ENCODE measurements at regions of chr1 and their contacts with region 1.

Region 1: DNA sequence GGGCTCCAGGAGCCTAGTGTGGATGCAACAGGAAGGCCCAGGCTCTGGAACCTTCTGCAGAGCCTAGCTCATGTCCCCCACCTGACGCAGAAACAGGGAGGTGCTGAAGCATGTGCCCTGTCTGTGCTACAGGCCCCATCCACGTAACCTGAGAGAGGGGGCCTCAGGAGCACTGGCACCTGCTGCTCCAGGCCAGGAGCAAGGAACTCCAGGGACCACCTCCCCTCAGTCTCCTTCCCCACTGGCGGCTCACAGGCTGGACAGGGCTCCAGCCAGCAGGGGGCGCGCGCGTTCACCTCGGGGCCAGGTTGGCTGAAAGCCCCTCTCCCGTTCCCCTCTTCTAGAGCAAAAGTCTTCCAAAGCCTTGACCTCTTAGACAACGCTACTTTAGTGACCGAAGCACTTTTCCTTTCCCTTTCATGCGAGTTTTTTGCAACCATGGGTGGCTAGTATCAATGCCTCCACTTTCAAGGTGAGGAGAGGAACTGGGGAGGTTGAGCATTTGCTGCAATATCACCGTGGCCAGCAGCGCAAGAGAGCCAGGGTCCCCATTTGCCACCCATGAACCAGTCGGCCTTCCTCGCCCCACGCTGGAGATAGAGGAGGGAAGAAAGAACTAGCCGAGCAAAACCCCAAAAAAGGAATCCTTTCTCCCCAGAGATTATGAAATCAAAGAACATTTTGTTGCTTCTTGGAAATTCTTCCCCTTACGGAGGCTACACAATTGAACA is 52.4 kb upstream of the GPR157 start:
- DNase-seq: no peak
- H3K4me3 ChIP-seq: peak overlapping the region; percentile 89
- H3K27me3 ChIP-seq: no peaks in the 10 kb centered on the region
- CTCF ChIP-seq: peak; percentile 99

Region 2: DNA sequence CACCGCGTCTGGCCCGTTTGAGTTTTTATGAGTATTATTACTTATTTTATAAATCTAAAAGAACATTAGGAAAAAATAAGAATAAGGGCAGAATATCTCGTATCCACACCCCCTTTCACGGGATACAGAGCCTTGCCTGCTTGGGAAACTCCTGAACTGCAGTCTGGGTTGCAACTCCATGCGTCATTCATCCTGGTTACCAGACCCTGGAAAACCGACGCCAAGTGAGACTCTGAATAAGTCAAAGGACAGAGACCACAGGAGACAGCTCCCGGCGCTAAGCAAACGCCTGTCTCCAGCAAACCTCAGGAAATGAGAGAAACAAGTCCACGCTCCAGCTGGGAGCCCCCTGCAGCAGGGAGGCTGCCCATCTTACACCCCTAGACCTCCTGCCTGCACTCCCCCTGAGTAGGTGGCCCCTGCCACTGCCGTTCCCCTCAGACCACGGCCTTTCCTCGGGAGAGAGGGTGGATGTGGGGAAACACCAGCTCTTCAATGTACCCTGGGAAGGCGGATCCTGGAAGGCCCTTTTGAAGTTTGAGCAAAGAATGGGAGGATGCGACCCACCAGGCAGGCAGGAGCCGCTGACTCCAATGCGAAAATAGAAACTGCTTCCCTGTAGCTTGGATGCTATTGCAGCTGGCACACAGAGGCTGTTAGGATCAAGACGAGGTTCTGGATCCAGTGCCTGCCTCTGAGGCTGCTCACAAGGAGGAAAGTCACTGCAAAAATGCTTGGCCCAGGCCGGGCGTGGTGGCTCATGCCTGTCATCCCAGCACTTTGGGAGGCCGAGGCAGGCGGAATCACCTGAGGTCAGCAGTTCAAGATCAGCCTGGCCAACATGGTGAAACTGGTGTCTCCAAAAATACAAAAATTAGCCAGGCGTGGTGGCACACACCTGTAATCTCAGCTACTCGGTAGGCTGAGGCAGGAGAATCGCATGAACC is 14.8 kb before region 1 on chr1:
- CTCF ChIA-PET with region 1: interaction called, 30 read pairs
- POLR2A ChIA-PET with region 1: no interaction called
- DNase-seq: no peak
- H3K4me3 ChIP-seq: no peak overlapping the region
- H3K27me3 ChIP-seq: no peaks in the 10 kb centered on the region
- CTCF ChIP-seq: no peak

Region 3: DNA sequence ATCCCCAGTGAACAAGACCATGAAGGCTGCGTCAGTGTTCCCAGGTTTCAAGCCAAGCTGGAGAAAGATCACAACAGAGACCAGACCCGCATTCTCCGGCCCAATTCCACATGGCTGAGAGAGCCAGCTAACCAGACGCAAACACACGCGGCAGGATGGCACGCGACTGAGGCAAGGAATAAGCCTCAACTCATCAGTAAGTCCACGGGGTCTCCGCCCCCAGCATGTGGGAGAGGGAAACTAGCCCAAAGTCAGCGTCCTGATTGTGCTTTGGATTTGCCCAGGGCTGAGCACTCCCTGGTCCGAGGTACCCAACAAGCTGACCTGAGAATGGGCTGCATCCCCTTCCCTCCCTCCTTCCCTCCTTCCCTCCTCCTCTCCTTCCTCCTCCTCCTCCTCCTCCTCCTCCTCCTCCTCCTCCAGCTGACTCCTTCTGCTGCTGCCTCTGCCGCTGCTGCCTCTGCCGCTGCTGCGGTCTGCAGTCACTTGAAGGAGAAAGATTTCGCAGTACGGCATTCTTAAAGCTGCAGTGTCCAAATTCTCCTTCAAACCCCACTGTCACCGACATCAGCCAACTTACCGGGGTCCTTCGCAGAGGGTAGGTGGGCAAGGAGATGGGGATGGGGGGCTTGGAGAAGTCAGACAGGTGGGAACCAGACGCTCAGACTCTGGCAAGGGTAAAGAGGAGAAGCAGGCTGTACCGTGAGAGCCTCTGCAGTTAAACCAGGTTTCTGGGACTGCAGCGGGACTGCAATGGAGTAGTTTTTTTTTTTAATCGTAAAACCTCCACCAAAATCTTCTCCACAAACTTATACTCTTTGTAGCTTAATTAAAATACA is 20.3 kb after region 1 on chr1:
- CTCF ChIA-PET with region 1: interaction called, 13 read pairs
- POLR2A ChIA-PET with region 1: interaction called, 15 read pairs
- DNase-seq: no peak
- H3K4me3 ChIP-seq: peak overlapping the region; percentile 55
- H3K27me3 ChIP-seq: peaks cover 6% of the 10 kb centered on the region
- CTCF ChIP-seq: no peak

Measured in BJ (cell line).